PC-9 (cell line): ENCODE measurements at regions of chr2 and their contacts with region 1.

Region 1: GRCh38 chr2:101831351-101831865 is 133.9 kb downstream of the MAP4K4 start:
- DNase-seq: peak; percentile 49 to 55
- H3K4me3 ChIP-seq: no peak overlapping the region
- H3K27ac ChIP-seq: peak overlapping the region; percentile 41
- H3K4me1 ChIP-seq: peaks cover 54% of the 10 kb centered on the region
- H3K27me3 ChIP-seq: no peaks in the 10 kb centered on the region
- CTCF ChIP-seq: peak; percentile 76

Region 2: DNA sequence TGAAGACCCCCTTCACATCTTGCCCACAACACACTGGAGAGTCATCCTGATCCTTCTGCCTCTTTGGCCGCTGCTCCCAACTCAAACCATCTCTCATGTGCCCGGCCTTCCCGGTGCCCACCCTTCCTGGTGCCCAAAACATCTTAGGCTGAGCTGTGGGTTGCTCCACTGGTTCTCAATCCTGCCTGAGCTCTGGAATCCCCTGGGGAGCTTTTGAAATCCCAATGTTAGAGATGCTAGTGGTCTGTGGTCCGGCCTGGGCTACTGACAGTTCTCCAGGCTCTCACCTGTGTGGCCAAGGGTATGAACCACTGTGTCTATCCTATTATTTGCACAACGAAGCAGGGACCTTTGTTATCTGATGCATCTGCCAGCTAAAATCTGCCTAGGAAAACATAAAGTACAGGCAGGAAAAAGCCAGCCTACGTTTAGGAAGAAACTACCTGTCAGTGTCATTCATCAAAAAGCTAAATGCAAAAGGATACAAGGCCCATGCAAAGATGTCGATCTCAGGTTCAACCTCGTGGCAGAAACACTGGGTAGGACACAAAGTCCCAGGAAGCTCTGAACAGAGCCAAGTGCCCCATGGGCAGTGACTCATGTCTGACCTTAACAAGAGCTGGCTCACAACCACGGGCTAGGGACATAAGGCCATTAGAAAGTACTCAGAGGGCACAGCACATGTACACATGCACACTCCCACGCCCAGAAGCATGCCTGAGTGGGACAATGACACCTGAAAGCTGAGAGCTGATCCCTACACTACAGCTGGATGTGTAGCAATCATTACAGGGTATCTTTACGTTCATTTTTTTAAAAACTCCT is 711.0 kb before region 1 on chr2:
- CTCF ChIA-PET with region 1: no interaction called
- POLR2A ChIA-PET with region 1: no interaction called
- intact Hi-C with region 1: loop called (anchors 5 kb)
- DNase-seq: peak; percentile 79 to 98
- H3K4me3 ChIP-seq: no peak overlapping the region
- H3K27ac ChIP-seq: peak overlapping the region; percentile 84
- H3K4me1 ChIP-seq: peaks cover 90% of the 10 kb centered on the region
- H3K27me3 ChIP-seq: no peaks in the 10 kb centered on the region
- CTCF ChIP-seq: no peak

Region 3: DNA sequence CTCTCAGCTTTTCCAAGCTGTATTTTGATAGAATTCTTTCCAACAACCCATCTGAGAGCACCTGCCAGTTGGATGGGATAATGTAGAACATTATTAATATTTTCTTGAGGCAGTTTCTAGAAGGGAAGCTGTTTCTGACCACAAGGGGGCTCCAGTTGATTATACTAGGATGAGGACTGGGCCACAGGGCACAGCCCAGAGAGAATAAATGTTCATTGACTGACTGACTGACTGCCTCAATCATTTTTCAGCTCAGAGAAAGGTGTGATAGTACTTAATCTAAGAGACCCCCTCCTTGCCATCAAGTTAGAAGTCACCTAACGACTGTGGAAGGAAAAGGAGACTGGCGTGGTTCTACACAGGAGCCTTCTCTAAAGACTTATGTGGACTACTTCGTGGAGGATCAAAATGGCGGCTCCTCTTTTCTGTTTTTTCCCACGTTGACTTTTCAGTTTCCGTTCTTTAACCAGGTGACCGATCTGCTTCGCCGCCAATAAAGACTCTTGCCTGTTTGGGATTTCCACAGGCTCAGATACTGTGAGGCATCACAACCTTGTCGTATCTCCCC is 412.2 kb before region 1 on chr2:
- CTCF ChIA-PET with region 1: interaction called, 7 read pairs
- POLR2A ChIA-PET with region 1: no interaction called
- intact Hi-C with region 1: loop called (anchors 1 kb)
- DNase-seq: peak; percentile 34 to 47
- H3K4me3 ChIP-seq: no peak overlapping the region
- H3K27ac ChIP-seq: no peak overlapping the region
- H3K4me1 ChIP-seq: 0 out of 2 replicates have a peak, but pooled peaks cover 5% of the 10 kb centered on the region
- H3K27me3 ChIP-seq: no peaks in the 10 kb centered on the region
- CTCF ChIP-seq: peak; percentile 90

Region 4: DNA sequence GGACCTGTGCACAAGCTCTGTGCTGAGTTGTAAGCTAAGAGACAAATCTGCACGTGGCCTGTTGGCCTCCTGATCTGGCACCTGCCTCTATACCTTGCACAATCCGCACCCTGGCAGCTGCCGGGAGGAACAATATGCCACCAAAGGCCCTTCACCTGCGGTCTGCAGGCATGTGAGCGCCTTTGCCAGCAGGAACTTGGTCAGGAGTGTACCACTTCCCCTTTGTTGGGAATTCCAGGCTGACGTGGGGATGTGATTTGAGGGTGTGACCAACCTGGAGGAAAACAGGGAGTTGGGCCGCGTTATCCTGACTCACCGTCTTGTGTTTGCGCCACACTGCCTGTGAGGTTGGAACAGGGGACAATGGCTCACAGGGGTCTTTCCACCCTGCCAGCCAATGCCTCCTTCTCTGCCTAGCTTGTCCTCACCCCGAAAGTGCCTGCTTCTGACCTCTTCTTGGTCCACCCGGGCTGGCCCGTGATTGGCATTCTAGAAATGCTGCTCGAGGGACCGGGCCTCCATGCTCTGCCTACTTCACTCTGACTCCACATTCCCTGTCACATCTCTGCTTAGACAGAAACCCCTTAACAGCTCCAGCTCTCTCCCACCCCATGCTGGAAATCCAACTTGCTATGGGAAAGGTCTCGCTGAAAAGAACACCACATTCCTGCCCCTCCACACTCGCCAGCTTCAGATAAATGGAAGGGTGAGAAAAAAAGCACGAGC is 201.0 kb before region 1 on chr2:
- CTCF ChIA-PET with region 1: no interaction called
- POLR2A ChIA-PET with region 1: no interaction called
- intact Hi-C with region 1: loop called (anchors 5 kb)
- DNase-seq: peak; percentile 91 to 98
- H3K4me3 ChIP-seq: no peak overlapping the region
- H3K27ac ChIP-seq: peak overlapping the region; percentile 94
- H3K4me1 ChIP-seq: peaks cover 42% of the 10 kb centered on the region
- H3K27me3 ChIP-seq: no peaks in the 10 kb centered on the region
- CTCF ChIP-seq: no peak

Region 5: DNA sequence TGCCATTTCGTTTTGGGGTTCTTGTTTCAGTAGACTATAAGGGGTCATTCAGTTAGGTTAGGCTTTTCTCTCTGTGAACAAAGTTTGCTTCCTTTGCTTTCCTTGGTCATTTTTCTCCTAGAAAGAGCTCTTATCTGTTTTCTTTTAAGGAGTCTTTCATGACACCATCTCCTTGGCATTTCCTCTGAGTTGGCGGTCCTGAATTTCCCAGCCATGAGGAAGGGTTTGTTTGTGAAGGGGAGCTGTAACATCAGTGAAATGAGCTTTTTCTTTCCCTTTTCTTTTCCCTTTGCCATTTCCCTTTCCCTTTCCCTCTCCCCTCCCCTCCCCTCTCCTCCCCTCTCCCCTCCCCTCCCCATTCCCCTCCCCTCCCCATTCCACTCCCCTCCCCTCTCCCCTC is 72.2 kb before region 1 on chr2:
- CTCF ChIA-PET with region 1: interaction called, 24 read pairs
- POLR2A ChIA-PET with region 1: interaction called, 4 read pairs
- intact Hi-C with region 1: no loop called
- DNase-seq: peak; percentile 55 to 91
- H3K4me3 ChIP-seq: peak overlapping the region; percentile 28; the same call in 1 of the 2 replicates
- H3K27ac ChIP-seq: peak overlapping the region; percentile 73
- H3K4me1 ChIP-seq: peaks cover 67% of the 10 kb centered on the region
- H3K27me3 ChIP-seq: no peaks in the 10 kb centered on the region
- CTCF ChIP-seq: no peak

Region 6: GRCh38 chr2:101806123-101806522 is 25.3 kb before region 1 on chr2:
- CTCF ChIA-PET with region 1: interaction called, 3 read pairs
- POLR2A ChIA-PET with region 1: interaction called, 4 read pairs
- intact Hi-C with region 1: loop called (anchors 1 kb)
- DNase-seq: peak; percentile 70 to 90
- H3K4me3 ChIP-seq: peak overlapping the region; percentile 11; the same call in 1 of the 2 replicates
- H3K27ac ChIP-seq: peak overlapping the region; percentile 80
- H3K4me1 ChIP-seq: peaks cover 68% of the 10 kb centered on the region
- H3K27me3 ChIP-seq: no peaks in the 10 kb centered on the region
- CTCF ChIP-seq: no peak

Region 7: DNA sequence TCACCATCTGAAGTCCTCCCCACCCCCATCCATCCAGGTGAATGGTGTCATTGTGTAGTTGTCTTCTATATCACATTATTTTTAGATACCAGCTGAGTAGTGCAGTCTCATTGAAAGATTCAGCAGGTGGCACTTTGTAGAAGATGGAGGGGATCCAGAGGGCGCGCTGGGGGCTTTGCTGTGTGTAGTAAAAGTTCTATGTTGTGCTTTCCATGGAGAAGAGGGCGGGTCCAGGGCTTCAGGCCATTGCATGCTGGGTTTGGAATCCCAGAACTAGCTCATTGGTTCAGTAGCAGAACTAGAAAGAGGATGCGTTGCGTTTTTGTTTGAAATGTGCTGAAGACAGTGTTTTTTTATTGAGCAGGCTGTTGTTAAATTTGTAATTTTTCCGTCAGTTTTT is 13.9 kb before region 1 on chr2:
- CTCF ChIA-PET with region 1: no interaction called
- POLR2A ChIA-PET with region 1: no interaction called
- intact Hi-C with region 1: no loop called
- DNase-seq: no peak
- H3K4me3 ChIP-seq: no peak overlapping the region
- H3K27ac ChIP-seq: no peak overlapping the region
- H3K4me1 ChIP-seq: peaks cover 37% of the 10 kb centered on the region
- H3K27me3 ChIP-seq: no peaks in the 10 kb centered on the region
- CTCF ChIP-seq: no peak